ENCODE measurements at regions of chr10 and their contacts with region 1.

Region 1: DNA sequence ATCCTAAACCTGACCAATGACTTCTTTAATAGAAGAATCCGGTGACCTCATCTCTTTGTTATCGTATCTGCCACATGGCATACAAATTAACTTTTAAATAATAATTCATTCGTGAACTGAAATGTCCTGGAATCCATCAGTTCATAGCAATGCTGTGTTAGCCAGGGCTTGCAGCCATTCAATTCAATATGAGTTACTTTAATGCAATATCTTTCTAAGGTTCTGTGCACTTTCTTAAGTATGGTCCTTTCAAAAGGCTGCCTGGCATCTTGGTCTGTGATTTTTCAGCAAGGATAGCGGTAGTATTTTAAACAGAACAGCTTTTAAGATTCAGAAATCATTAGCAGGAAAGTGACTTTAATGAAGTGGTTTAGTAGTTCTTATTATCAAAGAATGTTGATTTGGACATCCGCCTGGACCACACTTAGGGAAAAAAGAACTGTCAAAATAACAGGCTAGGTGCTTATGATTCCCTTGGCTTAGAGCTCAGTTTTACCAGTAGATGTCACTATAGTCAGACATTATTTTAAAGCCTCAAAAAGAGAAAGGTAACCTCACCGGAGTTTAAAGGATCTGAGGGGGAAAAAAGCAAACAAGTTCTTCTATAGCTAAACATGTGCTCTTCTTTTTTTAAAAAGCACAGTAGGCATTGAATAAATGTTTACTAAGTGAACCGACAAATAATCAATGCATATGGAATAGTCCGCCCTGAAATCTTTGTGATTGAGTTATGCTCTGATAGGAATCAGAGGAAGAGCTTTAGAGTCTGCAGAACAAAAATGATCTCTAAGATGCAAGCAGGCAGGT is 22.7 kb downstream of the SLC35G1 start:
- DNase-seq: peak; percentile 24
- H3K4me3 ChIP-seq: no peak overlapping the region
- H3K27ac ChIP-seq: no peak overlapping the region
- H3K4me1 ChIP-seq: no peaks in the 10 kb centered on the region
- H3K27me3 ChIP-seq: no peaks in the 10 kb centered on the region
- CTCF ChIP-seq: peak; percentile 47 to 56

Region 2: DNA sequence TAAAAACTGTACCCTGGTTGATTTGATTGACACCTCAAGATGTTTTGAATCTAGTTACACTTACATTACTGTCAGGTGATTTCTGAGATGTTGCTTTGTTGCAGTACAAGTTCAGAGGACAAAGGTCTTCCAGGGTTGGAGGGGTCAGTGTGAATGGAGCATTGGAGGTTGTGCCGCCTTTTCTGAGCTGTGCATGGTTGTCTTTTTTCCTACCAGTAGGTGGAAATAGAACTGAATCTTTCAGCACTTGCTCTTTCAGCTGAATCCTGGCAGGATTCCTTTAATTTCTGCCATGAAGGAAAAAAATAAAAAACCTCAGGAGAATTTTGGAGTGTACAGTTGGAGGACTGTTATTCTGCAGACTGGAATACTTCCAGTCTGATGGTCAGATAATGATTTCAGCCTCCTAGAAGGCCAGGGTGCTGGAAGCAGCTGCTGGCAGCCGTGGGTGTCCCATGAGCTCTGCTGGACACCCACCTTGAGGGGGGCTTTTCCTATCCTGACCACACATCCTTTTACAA is 159.9 kb after region 1 on chr10:
- CTCF ChIA-PET with region 1: no interaction called
- dilution Hi-C with region 1: no loop called
- in situ Hi-C with region 1: no loop called
- intact Hi-C with region 1: loop called (anchors 5 kb)
- DNase-seq: no peak
- H3K4me3 ChIP-seq: no peak overlapping the region
- H3K27ac ChIP-seq: no peak overlapping the region
- H3K4me1 ChIP-seq: no peaks in the 10 kb centered on the region
- H3K27me3 ChIP-seq: peaks cover 1% of the 10 kb centered on the region
- CTCF ChIP-seq: peak in 1 of 2 donors; percentile 43

Region 3: GRCh38 chr10:94225589-94225988 is 309.1 kb after region 1 on chr10:
- CTCF ChIA-PET with region 1: interaction called, 4 read pairs
- dilution Hi-C with region 1: no loop called
- in situ Hi-C with region 1: no loop called
- intact Hi-C with region 1: loop called (anchors 1 kb)
- DNase-seq: no peak
- H3K4me3 ChIP-seq: no peak overlapping the region
- H3K27ac ChIP-seq: no peak overlapping the region
- H3K4me1 ChIP-seq: no peaks in the 10 kb centered on the region
- H3K27me3 ChIP-seq: no peaks in the 10 kb centered on the region
- CTCF ChIP-seq: peak; percentile 20 to 39

Region 4: GRCh38 chr10:94315024-94315451 is 398.6 kb after region 1 on chr10:
- CTCF ChIA-PET with region 1: interaction called, 8 read pairs
- dilution Hi-C with region 1: no loop called
- in situ Hi-C with region 1: loop called (anchors 10 kb)
- intact Hi-C with region 1: loop called (anchors 1 kb)
- DNase-seq: no peak
- H3K4me3 ChIP-seq: no peak overlapping the region
- H3K27ac ChIP-seq: no peak overlapping the region
- H3K4me1 ChIP-seq: no peaks in the 10 kb centered on the region
- H3K27me3 ChIP-seq: no peaks in the 10 kb centered on the region
- CTCF ChIP-seq: no peak

Region 5: GRCh38 chr10:94320285-94320914 is 403.9 kb after region 1 on chr10:
- CTCF ChIA-PET with region 1: interaction called, 8 read pairs
- dilution Hi-C with region 1: no loop called
- in situ Hi-C with region 1: loop called (anchors 10 kb)
- intact Hi-C with region 1: loop called (anchors 1 kb)
- DNase-seq: peak; percentile 37
- H3K4me3 ChIP-seq: no peak overlapping the region
- H3K27ac ChIP-seq: no peak overlapping the region
- H3K4me1 ChIP-seq: no peaks in the 10 kb centered on the region
- H3K27me3 ChIP-seq: no peaks in the 10 kb centered on the region
- CTCF ChIP-seq: peak; percentile 73 to 79

Region 6: GRCh38 chr10:94439275-94439861 is 522.9 kb after region 1 on chr10:
- CTCF ChIA-PET with region 1: interaction called, 12 read pairs
- dilution Hi-C with region 1: no loop called
- in situ Hi-C with region 1: no loop called
- intact Hi-C with region 1: loop called (anchors 5 kb)
- DNase-seq: peak; percentile 3
- H3K4me3 ChIP-seq: no peak overlapping the region
- H3K27ac ChIP-seq: no peak overlapping the region
- H3K4me1 ChIP-seq: no peaks in the 10 kb centered on the region
- H3K27me3 ChIP-seq: no peaks in the 10 kb centered on the region
- CTCF ChIP-seq: peak in 1 of 2 donors; percentile 7

Region 7: DNA sequence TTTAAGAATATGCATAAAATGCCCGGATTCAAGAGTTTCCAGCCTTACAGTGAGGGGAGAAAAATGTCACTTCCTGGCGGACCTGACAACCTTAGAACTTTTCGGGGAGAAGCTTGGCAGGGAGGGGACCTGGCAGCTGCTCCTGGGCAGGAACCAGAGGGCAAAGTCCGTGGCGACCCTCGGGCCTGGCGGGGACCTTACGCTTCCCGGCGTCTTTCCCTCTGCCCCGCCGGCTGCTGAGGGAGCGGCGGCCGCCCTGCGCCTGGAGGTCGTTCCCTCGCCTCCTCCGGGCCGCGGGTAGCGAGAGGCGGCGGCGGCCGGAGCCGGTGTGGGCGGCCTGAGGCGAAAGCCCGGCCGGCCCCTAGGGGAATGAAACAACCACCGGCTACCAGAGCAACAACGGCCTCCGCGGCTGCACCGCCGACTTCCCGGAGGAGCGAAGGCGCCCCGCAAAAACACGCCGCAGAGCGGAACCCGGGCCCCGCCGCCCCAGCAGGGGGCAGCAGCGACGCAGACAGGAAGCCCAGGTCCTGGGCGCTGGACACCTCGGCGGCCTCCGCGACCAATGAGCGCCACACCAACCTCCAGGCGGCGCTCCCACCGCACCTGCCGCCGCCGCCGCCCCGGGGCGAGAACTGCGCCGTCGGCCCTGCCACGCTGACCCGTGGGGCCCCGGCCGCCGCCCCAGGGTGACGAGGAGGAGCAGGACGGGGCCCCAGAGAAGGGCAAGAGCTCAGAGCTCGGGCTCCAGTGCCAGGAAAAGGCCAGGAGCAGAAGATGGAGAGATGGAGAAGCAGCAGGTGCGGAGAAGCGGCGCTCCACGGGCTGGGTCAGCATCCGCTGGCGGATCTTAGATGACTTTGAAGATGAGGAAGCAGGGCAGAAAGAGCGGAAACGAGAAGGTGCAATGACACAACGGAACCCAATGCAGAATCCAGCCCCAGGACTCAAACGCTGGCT is 1267.1 kb after region 1 on chr10:
- CTCF ChIA-PET with region 1: no interaction called
- dilution Hi-C with region 1: no loop called
- in situ Hi-C with region 1: no loop called
- intact Hi-C with region 1: loop called (anchors 5 kb)
- DNase-seq: peak; percentile 70
- H3K4me3 ChIP-seq: peak overlapping the region; percentile 58 to 66 (median 66)
- H3K27ac ChIP-seq: no peak overlapping the region
- H3K4me1 ChIP-seq: peaks cover 4% of the 10 kb centered on the region
- H3K27me3 ChIP-seq: no peaks in the 10 kb centered on the region
- CTCF ChIP-seq: peak; percentile 49 to 74